Right cardiac atrium (tissue), 5 donors: ENCODE measurements at regions of chr17 and their contacts with region 1.

Region 1: DNA sequence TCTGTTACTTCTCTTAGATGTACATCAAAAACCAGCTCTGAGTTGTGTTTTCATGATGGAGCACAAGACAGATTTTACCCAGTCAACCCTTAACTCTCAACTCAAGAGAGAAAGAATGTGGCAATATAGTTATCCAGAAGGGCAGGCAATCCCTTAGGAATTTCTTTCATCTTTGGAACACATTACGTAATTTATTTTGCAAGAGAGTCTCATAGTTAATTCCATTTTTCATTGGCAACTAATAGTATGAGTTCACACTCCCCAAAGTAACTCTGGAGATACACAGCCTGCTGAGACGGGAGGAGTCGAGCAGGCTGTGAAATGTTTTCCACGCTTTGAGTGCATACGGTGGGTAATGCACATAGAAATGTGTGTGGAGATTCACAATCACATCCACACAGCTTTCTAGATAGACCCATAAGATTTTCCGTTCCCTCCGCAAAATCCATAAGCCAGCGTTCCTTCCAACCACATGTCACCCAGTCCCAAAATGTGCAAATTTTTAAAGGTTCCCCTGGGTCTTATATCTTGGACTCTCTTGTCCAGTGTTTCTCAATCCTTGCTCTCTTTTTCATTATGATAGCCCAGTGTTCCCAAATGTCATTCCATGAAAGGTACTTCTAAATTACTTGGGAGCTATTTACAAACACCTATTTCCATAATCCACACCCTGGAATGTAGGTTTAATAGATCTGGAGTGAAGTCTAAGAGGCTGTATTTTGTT is 8.4 kb upstream of the CDRT4 start:
- DNase-seq: no peak
- ATAC-seq: peak; percentile 83 to 88
- H3K4me3 ChIP-seq: no peak overlapping the region
- H3K27ac ChIP-seq: peak overlapping the region; percentile 74
- H3K4me1 ChIP-seq: peaks cover 8% of the 10 kb centered on the region
- H3K27me3 ChIP-seq: no peaks in the 10 kb centered on the region

Region 2: GRCh38 chr17:15490634-15491261 is 15.0 kb after region 1 on chr17:
- intact Hi-C with region 1: loop called in 1 of 4 experiments (anchors 2 kb)
- DNase-seq: peak; percentile 83 to 90 (median 86)
- ATAC-seq: peak; percentile 92 to 99
- H3K4me3 ChIP-seq: no peak overlapping the region
- H3K27ac ChIP-seq: peak overlapping the region; percentile 84
- H3K4me1 ChIP-seq: no peaks in the 10 kb centered on the region
- H3K27me3 ChIP-seq: no peaks in the 10 kb centered on the region